Activated T-helper 1 cell treated with anti-CD3 and anti-CD28 coated beads, Interleukin-12 subunit alpha, Interleukin-12 subunit beta, Interleukin-2, Interleukin-4 antibody, amounts not matched to agents 30 ng/mL and 10 ng/mL and 1 ng/mL, durations not matched to agents 14 hours and 24 hours and 36 hours (primary cell): ENCODE measurements at regions of chr10 and their contacts with region 1.

Region 1: DNA sequence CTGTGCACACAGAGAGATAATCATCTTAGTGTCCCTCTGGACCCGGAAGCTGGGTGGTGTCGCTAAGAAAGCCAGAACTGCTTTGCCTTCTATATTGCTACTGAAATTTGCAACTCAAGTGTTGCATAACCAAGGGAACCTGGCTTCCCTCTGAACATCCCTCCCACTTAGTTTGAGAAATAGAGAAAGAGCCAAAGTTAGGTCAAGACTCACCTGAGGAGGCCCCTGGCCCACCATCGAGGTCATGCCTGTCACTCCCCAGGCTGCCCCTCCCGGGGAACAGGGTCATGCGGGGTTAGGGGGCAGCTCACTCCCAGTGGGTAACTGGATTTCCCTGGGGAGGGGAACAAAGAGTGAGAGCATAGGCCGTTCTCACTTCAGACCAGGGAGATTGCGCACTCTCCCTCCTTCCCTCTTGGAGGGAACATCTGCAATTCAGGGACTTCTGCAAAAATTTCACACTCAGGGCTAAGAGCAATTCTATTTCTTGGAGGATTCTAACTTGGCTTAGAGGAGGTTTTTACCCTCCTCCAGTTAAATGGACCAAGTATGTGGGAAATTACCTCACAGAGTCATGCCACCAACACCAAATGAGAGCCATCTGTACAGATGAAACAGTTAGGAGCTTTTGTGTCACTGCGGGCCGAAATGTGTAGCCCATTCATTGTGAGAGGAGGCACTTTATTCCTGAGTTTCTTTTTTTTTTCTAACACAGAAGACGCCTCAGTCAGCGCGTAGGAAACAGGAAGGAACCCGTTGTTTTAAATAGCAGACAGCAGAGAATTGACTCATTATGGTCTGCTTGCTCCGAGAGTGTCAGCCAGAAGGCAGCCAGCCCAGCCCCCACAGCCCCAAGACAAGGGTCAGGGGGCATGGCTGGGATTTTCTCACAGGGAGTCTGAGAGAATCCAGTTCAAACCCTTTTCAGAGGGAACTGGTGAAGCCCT is 221.3 kb downstream of the ARHGAP12 start:
- DNase-seq: peak; percentile 49
- H3K4me3 Mint-ChIP-seq: peak overlapping the region; percentile 38
- H3K27ac Mint-ChIP-seq: peak overlapping the region; percentile 83
- H3K4me1 Mint-ChIP-seq: peaks cover 31% of the 10 kb centered on the region
- H3K27me3 Mint-ChIP-seq: no peaks in the 10 kb centered on the region

Region 2: DNA sequence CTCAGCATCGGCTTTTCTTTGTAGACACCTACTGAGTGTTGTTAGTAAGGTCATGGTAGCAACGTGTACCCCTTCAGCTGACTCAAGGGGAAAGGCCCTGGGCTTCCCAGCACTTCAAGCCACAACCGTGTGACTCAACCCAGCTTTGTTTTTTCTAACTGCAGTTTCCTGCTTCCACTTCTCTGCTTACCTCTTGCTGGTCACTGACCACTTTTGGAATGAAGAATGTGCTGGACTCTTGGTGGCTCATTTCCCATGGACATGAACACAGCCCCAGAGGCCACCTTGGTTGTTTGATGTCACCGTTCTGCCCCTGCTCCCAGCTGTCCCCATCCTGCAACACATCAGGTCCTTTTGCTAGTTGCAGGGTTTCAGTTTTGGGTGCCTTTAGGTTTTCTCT is 606.2 kb before region 1 on chr10:
- intact Hi-C with region 1: loop called (anchors 5 kb)
- DNase-seq: peak; percentile 72
- H3K4me3 Mint-ChIP-seq: peak overlapping the region; percentile 51
- H3K27ac Mint-ChIP-seq: peak overlapping the region; percentile 94
- H3K4me1 Mint-ChIP-seq: peaks cover 81% of the 10 kb centered on the region
- H3K27me3 Mint-ChIP-seq: no peaks in the 10 kb centered on the region

Region 3: GRCh38 chr10:31603235-31604087 is 103.9 kb before region 1 on chr10:
- intact Hi-C with region 1: loop called (anchors 1 kb)
- DNase-seq: peak; percentile 82
- H3K4me3 Mint-ChIP-seq: peak overlapping the region; percentile 80
- H3K27ac Mint-ChIP-seq: no peak overlapping the region
- H3K4me1 Mint-ChIP-seq: peaks cover 29% of the 10 kb centered on the region
- H3K27me3 Mint-ChIP-seq: peaks cover 6% of the 10 kb centered on the region

Region 4: GRCh38 chr10:31745612-31746376 is 38.4 kb after region 1 on chr10:
- intact Hi-C with region 1: loop called (anchors 1 kb)
- DNase-seq: peak; percentile 49
- H3K4me3 Mint-ChIP-seq: peak overlapping the region; percentile 2
- H3K27ac Mint-ChIP-seq: peak overlapping the region; percentile 82
- H3K4me1 Mint-ChIP-seq: peaks cover 27% of the 10 kb centered on the region
- H3K27me3 Mint-ChIP-seq: no peaks in the 10 kb centered on the region

Region 5: DNA sequence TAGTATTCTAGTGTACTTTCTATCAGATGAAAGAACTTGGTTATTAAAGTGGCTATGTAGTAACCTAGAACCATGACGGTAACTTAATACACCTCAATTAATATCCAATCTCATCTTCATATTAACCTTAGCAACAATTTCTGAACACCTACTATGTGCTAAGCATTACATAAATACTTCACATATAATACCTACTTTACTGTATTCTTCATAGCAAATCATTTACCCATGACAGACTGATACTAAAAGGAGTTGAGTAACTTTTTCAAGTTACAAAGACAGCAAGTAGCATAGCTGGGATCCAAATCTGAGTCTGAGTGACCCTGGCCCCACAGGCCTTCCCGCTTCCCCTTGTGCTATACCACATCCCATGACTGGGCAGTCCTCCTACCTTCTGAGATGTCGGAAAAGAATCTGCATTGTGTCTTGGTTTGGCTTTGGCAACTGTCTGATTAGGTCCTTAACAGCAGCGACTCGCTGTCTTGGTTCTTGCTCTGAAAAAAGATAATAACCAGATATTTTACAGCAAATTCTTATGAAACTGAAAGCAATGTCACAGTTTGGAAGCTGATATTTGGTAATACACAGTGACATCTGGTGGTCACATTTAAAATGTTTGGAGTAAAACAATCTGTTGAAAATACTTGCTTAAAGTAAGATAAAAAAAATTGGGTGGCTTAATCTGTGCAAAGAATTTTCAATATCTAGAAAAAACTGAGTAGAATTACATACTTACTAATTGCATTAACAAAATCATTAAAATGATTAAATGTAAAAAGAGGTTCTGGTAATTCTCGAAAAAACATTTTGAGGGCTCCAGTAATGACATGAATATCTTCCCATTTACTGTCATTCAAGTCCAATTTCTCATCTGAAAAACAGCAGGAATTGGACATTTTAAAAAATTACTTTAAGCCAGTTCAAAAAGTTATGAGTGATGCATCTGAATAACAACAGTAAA is 101.2 kb after region 1 on chr10:
- intact Hi-C with region 1: loop called (anchors 5 kb)
- DNase-seq: peak; percentile 2
- H3K4me3 Mint-ChIP-seq: peak overlapping the region; percentile 50
- H3K27ac Mint-ChIP-seq: peak overlapping the region; percentile 57
- H3K4me1 Mint-ChIP-seq: peaks cover 7% of the 10 kb centered on the region
- H3K27me3 Mint-ChIP-seq: peaks cover 3% of the 10 kb centered on the region